AG04450 (cell line): ENCODE measurements at regions of chr3 and their contacts with region 1.

Region 1: DNA sequence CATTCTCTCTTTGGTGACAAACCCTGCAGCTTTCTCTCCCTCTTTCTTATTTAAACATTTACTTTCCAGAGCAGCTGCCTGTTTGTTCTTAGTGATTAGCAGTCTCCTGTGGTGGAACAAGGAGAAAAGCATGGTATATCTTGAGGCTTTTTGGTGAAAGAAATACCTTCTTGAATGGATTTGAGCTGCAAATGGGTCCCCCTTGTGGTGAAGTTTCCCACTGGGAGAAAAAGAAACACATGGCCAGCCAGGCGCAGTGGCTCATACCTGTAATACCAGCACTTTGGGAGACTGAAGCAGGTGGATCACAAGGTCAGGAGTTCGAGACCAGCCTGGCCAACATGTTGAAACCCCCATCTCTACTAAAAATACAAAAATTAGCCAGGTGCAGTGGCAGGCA is 48.3 kb upstream of the ACP3 start:
- DNase-seq: peak; percentile 4
- H3K4me3 ChIP-seq: no peak overlapping the region
- H3K27ac ChIP-seq: no peak overlapping the region
- H3K27me3 ChIP-seq: peaks cover 3% of the 10 kb centered on the region
- CTCF ChIP-seq: peak; percentile 58

Region 2: DNA sequence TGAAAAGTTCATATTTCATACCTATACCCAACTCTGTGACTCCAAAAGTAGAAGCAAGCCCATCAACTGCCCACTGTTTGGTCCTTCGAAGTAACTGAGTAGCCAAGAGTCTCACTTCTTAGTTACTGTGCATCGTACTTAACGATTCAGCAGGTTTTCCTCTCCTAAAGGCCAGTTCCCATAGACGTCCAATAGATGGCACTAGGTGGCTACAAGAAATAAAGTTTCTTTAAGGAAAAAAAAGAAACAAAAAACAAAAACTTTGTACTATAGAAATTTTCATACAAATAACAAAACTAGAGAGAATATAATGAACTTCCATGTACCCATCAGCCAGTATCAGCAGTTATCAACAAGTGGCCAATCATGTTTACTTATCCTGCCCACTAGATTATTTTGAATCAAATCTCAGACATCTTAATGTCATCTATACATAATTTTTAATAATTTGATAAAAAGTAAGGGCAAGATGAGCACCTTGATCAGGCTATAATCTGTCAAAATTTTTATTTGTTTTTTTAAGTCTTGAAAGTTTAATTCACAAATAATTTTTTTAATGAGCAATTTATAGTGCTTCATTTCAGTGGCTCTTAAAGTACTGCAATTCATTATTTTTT is 15.6 kb before region 1 on chr3:
- CTCF ChIA-PET with region 1: interaction called, 15 read pairs
- POLR2A ChIA-PET with region 1: no interaction called
- DNase-seq: peak; percentile 41
- H3K4me3 ChIP-seq: no peak overlapping the region
- H3K27ac ChIP-seq: no peak overlapping the region
- H3K27me3 ChIP-seq: peaks cover 2% of the 10 kb centered on the region
- CTCF ChIP-seq: peak; percentile 91